ENCODE measurements at regions of chr3 and their contacts with region 1.

Region 1: DNA sequence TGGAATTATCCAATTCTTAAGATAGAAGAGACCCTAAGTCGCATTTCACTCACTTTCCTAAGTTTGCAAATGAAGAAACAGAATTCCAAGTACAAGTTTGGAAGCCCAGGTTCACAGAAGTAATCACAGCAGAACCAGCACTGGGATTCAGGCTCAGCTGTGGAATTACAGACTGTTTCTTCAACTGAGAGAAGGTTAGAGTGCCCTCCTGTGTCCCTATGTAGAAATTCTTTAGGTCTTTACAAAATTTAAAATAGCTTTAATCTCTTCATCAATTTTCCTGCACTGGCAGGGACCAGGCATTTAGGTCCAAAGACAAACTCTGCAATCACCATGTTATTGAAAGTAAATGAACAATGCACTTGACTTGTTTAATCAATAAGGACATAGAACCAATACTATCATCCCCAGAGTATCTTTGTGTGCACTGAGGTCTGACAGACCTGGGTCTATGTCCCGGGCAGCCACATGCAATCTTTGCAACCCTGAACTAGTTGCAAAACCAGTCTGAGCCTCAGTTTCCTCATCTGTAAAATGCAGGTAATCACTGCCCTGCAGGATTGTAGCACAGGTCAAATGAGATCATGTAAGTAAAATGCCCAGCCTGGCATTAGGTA is 96.3 kb upstream of the ZBED2 start:
- DNase-seq: peak in 2 of 9 experiments; percentile 54 to 71
- ATAC-seq: peak; percentile 68
- H3K4me3 ChIP-seq: no peak overlapping the region
- H3K4me3 Mint-ChIP-seq: no peak overlapping the region
- H3K27ac ChIP-seq: no peak overlapping the region
- H3K27ac Mint-ChIP-seq: no peak overlapping the region
- H3K4me1 ChIP-seq: peaks cover 5% of the 10 kb centered on the region
- H3K4me1 Mint-ChIP-seq: peaks cover 68% of the 10 kb centered on the region
- H3K27me3 ChIP-seq: no peaks in the 10 kb centered on the region
- H3K27me3 Mint-ChIP-seq: no peaks in the 10 kb centered on the region
- CTCF ChIP-seq: peak; percentile 65

Region 2: DNA sequence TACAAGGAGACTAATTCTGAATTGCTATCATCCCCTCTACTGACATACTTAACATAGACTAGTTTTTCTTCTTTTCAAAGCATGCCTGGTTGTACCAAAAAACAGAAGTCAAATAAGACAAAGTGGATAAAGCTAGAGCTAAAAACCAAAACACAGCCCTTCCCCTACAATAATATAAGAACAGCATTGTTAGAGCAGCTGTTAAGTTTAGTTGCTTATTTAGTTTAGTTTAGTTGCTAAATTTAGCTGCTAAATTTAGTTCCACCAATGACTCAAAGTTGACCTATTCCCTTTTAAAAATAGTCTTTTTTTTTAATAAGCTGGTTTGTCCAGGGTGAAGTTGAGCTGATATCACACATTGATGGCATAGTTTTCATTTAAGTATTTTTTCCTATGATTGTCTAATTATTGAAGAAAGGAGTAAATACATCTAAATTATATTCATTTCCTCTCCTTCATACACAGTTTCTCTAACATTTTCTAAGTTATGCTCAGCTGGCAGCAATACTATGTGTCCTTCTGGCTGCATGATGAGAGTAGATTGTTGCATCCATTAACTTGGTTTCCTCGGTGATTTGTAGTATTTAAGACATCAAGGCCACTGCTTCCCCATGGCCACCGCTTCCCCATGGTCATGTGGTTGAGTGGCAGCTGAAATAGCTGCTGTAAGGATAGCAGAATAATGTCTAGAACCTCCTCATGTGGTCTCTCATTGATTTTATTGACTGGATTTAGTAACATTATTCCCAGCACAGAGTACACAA is 1338.4 kb before region 1 on chr3:
- CTCF ChIA-PET with region 1: no interaction called
- POLR2A ChIA-PET with region 1: no interaction called
- intact Hi-C with region 1: no loop called
- DNase-seq: no peak
- ATAC-seq: no peak
- H3K4me3 ChIP-seq: no peak overlapping the region
- H3K4me3 Mint-ChIP-seq: no peak overlapping the region
- H3K27ac ChIP-seq: no peak overlapping the region
- H3K27ac Mint-ChIP-seq: no peak overlapping the region
- H3K4me1 ChIP-seq: no peaks in the 10 kb centered on the region
- H3K4me1 Mint-ChIP-seq: no peaks in the 10 kb centered on the region
- H3K27me3 ChIP-seq: no peaks in the 10 kb centered on the region
- H3K27me3 Mint-ChIP-seq: peaks cover 2% of the 10 kb centered on the region
- CTCF ChIP-seq: no peak

Region 3: DNA sequence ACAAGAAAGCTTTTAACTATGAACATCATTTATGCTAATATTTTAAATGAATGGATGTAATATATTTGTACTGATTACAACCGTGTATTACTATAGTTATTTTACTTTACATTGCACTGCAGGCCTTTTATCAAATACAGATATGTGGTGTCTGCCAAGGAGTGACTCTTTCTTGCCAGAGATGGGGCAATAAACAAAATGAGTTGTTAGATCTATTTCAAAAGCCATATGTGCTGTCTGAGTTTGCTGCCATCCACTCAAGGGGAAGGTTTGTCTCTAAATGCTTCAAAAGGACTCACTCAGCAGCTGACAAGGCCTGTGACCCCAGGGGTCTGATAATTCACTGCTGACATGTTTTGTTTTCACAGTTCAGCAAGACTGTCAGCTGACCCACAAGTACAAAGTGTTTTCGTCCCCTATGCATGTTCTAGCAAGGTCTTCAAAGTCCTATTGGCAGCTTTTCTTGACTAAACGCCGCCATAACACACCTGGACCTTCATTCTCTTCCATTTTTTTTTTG is 55.0 kb before region 1 on chr3:
- CTCF ChIA-PET with region 1: no interaction called
- POLR2A ChIA-PET with region 1: no interaction called
- intact Hi-C with region 1: loop called in 1 of 2 experiments (anchors 2 kb)
- DNase-seq: no peak
- ATAC-seq: no peak
- H3K4me3 ChIP-seq: no peak overlapping the region
- H3K4me3 Mint-ChIP-seq: no peak overlapping the region
- H3K27ac ChIP-seq: no peak overlapping the region
- H3K27ac Mint-ChIP-seq: peak overlapping the region; percentile 47
- H3K4me1 ChIP-seq: no peaks in the 10 kb centered on the region
- H3K4me1 Mint-ChIP-seq: peaks cover 2% of the 10 kb centered on the region
- H3K27me3 ChIP-seq: no peaks in the 10 kb centered on the region
- H3K27me3 Mint-ChIP-seq: no peaks in the 10 kb centered on the region
- CTCF ChIP-seq: no peak

Region 4: DNA sequence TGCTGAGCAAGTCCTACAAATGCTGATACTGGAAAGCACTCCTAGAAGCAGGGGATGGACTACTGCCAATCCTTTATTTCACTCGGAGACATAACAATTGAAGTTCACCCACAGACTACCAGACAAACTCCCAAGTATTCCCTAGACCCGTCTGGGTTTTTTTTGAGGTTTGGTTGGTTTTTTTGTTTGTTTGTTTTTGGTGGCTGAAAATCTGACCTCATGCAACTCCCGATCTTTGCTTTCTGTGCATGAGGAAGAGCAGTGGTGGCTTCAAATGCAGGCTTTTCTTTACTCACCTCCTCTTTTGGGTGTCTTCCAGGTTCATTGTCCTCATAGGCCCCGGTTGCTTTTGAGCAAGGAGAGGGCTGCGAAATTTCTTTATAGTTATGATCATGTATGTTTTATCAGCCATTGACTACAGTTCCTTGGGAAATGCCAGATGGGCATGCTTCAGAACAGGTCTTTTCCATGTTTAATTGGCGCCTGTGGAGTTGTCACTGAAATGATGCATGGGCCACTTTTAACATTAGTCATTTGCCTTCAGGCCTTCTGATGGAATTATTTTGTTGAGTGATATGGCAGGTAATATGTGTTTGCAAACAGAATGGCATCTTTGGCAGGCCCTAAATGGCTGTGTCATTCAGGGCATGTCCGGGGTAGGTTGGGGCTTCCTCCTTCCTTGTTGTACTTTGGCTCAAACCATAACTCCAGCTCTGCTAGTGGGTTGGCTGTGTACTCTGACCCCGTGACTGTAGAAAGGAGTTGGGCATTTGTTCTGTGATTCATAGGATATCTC is 15.0 kb before region 1 on chr3:
- CTCF ChIA-PET with region 1: interaction called, 7 read pairs
- POLR2A ChIA-PET with region 1: interaction called, 3 read pairs
- intact Hi-C with region 1: loop called (anchors 1 to 2 kb)
- DNase-seq: peak in 2 of 9 experiments; percentile 27 to 46
- ATAC-seq: no peak
- H3K4me3 ChIP-seq: peak overlapping the region; percentile 66 to 79
- H3K4me3 Mint-ChIP-seq: peak overlapping the region; percentile 96
- H3K27ac ChIP-seq: peak overlapping the region; percentile 1 to 85
- H3K27ac Mint-ChIP-seq: peak overlapping the region; percentile 99
- H3K4me1 ChIP-seq: peaks cover 68% of the 10 kb centered on the region
- H3K4me1 Mint-ChIP-seq: peaks cover 85% of the 10 kb centered on the region
- H3K27me3 ChIP-seq: no peaks in the 10 kb centered on the region
- H3K27me3 Mint-ChIP-seq: no peaks in the 10 kb centered on the region
- CTCF ChIP-seq: no peak

Region 5: DNA sequence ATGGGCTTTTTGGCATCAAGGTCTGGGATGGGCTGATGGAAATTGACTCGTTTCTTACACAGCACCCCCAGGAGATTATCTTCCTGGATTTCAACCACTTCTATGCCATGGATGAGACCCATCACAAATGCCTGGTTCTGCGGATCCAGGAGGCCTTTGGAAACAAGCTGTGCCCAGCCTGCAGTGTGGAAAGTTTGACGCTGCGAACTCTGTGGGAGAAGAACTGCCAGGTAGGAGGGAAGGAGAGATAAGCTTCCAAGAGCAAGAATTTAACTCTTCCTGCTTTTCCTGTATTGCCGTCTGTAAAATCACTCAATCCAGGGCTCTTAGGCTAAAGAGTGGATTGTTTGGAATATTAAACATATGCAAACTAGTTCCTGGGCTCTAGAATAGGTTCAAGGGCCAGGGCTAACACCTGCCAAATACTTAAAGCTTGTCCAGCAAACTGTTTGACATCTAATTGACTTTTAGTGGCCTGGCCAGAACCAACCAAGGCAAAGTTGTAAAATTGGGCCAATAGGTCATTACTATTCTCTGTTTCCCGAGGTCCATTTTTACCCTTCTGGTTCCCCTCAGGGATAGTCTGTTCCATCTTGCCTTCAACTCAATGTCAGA is 16.9 kb after region 1 on chr3:
- CTCF ChIA-PET with region 1: interaction called, 19 read pairs
- POLR2A ChIA-PET with region 1: interaction called, 5 read pairs
- intact Hi-C with region 1: no loop called
- DNase-seq: no peak
- ATAC-seq: no peak
- H3K4me3 ChIP-seq: no peak overlapping the region
- H3K4me3 Mint-ChIP-seq: no peak overlapping the region
- H3K27ac ChIP-seq: no peak overlapping the region
- H3K27ac Mint-ChIP-seq: no peak overlapping the region
- H3K4me1 ChIP-seq: no peaks in the 10 kb centered on the region
- H3K4me1 Mint-ChIP-seq: peaks cover 35% of the 10 kb centered on the region
- H3K27me3 ChIP-seq: no peaks in the 10 kb centered on the region
- H3K27me3 Mint-ChIP-seq: no peaks in the 10 kb centered on the region
- CTCF ChIP-seq: no peak

Measured in CD8-positive, alpha-beta T cell (primary cell).